Activated CD4-positive, alpha-beta T cell treated with anti-CD3 and anti-CD28 coated beads, Interleukin-2, amount 10 ng/mL, durations not matched to agents 7 days and 5 days (primary cell): ENCODE measurements at regions of chr6 and their contacts with region 1.

Region 1: DNA sequence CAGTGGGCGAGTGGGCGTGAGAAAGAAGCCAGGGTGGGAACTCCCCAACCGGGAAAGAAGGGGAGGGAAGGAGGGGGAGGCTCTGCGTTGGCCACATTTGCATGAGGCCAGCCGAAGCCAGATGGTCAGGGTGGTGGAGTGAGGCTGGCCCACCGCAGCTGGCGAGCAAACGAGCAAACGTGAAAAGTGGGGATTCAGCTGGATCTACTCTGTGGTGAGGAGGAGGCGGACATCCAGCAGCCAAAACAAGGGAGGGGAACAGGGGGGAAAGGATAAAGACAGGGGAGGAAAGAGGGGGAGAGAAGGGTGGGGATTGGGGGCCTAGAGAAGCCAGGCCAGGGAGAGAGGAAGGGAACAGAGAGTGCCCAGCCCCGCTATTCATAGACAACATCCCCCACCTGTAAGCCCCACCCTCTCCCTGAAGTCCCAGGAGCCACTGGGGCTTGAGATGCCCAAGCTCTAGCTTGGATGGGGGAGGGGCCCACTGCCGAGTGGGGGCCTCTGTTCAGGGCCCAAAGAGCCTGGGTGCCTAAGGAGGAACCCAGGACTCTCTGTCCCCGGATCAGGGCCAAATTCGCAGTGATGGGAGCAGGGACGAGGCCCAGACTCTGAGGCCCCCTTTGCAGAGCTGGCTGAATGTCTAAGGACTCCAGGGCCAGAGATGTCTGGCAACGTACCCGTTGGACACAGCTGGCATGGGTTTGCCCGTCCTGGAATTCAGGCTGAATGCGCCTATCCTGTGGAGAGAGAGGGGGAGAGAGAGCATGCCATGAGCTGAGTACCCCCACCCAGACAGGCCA is 45.1 kb downstream of the CPNE5 start:
- DNase-seq: no peak
- H3K4me3 Mint-ChIP-seq: no peak overlapping the region
- H3K27ac Mint-ChIP-seq: no peak overlapping the region
- H3K4me1 Mint-ChIP-seq: peaks cover 2% of the 10 kb centered on the region
- H3K27me3 Mint-ChIP-seq: peaks cover 16% of the 10 kb centered on the region

Region 2: DNA sequence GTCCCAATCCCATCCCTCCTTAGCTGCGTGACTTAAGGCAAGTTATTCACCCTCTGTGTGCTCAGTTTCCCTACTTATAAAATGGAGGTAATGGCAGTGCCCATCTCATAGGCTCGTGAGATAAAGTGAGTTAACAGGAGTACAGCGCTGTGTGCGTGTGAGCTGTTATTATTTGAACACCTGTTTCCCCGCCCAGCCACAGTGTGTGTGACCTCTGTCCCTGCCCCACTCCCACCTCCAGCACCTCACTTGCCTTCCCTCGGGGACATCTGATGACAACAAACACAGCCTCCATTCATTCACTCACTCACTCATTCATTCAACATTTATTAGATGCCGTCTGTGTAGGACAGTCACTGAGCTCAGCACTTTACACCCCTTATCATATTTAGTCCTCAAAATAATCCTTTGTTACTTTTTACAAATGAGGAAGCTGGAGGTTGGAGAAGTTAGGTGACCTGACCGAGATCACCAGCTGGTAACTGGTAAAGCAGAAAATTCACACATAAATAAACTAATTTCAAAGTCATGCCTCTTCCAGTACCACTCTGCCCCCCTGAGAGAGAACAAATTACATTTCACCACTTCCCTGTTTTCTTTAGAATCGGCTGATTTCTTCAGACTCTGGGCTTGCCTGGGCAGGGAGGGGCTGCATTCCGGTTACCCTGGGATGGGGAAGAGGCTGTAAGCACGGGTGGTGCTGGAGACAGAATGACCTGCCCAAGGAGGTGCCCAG is 13.5 kb before region 1 on chr6:
- CTCF ChIA-PET with region 1: interaction called, 58 read pairs
- POLR2A ChIA-PET with region 1: no interaction called
- DNase-seq: no peak
- H3K4me3 Mint-ChIP-seq: no peak overlapping the region
- H3K27ac Mint-ChIP-seq: no peak overlapping the region
- H3K4me1 Mint-ChIP-seq: peaks cover 12% of the 10 kb centered on the region
- H3K27me3 Mint-ChIP-seq: peaks cover 11% of the 10 kb centered on the region

Region 3: DNA sequence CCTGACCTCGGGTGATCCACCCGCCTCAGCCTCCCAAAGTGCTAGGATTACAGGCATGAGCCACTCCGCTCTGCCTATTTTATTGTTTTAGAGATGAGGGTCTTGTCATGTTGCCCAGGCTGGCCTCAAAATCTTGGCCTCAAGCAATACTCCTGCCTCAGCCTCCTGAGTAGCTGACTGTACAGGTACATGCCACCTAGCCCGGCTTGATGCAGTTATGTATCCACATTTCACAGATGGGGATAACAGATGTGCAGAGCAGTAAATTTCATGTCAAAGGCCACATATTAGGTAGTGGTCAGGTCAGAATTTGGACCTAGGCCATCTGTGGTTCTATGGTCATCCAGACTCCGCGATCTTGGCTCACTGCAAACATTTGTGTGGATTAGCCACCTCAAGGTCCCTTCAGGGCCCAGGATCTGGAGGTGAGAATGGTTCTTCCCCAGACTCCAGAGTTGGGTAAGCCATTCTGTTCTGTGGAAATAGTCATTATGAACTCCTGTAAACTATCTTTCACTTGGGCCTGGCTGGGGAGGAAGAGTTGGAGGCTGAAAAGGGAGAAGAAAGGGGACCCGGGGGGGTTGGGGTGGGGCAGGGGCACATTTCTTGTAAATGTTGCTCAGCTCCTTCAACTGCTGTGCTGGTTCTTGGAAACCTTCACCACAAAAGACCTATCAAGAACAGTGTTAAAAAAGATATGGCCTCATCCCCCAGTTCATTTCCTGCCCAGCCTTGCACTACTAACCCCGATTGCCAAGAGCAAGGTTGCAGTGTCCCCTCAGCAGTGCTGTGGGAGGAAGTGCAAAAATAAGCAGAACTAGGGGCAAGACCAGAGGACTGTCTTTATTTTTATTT is 388.9 kb after region 1 on chr6:
- CTCF ChIA-PET with region 1: no interaction called
- POLR2A ChIA-PET with region 1: no interaction called
- DNase-seq: peak; percentile 83
- H3K4me3 Mint-ChIP-seq: peak overlapping the region; percentile 60
- H3K27ac Mint-ChIP-seq: peak overlapping the region; percentile 94
- H3K4me1 Mint-ChIP-seq: peaks cover 70% of the 10 kb centered on the region
- H3K27me3 Mint-ChIP-seq: no peaks in the 10 kb centered on the region